ENCODE measurements at regions of chr7 and their contacts with region 1.

Region 1: DNA sequence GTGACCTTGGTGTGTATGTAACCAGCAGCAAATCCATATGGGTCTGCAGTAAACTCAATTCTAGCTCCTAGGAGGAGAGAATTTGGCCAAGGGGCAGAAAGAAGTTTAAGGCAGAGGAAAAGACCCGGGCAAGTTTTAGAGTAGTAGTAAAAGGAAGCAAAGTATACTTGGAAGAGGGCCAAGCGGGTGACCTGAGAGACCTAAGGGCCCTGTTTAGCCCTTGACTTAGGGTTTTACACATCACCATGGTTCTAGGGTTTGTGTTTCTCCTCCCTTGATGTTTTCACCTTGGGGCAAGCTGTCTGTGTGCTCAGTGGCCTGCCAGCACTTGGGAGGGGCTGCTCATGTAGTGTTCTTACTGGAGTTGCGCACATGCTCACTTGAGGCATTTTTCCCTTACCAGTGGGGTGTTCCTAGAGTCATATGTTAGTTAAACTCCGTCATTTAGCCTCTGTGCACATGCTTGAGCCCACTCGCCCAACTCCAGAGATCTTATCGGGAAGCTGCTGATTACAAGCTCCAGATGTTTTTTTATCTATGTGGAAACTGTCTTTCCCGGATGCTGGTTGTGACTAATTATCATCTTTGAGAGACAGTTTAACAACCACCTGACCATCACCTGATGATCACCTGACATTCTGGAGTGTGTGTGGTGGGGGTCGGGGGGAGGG is 137.6 kb upstream of the PRSS1 start:
- DNase-seq: no peak
- H3K4me3 Mint-ChIP-seq: no peak overlapping the region
- H3K27ac Mint-ChIP-seq: no peak overlapping the region
- H3K4me1 Mint-ChIP-seq: peaks cover 11% of the 10 kb centered on the region
- H3K27me3 Mint-ChIP-seq: no peaks in the 10 kb centered on the region
- CTCF ChIP-seq: no peak

Region 2: DNA sequence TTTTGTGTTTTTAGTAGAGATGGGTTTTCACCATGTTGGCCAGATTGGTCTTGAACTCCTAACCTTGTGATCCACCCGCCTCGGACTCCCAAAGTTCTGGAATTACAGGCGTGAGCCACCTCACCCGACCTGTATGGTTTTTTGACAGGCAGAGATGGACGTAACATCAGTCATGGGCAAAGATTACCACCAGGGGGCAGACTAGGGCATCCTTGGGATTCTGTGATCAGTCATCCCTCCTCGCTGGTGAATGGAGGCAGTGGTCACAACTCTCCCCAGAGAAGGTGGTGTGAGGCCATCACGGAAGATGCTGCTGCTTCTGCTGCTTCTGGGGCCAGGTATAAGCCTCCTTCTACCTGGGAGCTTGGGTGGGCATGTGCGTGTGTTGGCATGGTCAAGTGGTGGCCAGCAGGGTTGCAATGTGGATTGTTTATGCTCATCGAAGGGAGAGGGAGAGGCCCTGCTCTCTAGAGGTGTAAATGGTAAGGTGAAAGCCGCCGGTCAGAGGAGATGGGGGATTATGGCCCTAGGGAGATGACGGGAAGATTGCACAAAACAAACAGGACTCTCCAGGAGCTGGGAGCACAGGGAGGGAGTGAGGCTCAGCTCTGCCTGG is 14.8 kb after region 1 on chr7:
- CTCF ChIA-PET with region 1: interaction called, 36 read pairs
- POLR2A ChIA-PET with region 1: no interaction called
- intact Hi-C with region 1: no loop called
- DNase-seq: peak; percentile 77
- H3K4me3 Mint-ChIP-seq: no peak overlapping the region
- H3K27ac Mint-ChIP-seq: no peak overlapping the region
- H3K4me1 Mint-ChIP-seq: peaks cover 5% of the 10 kb centered on the region
- H3K27me3 Mint-ChIP-seq: no peaks in the 10 kb centered on the region
- CTCF ChIP-seq: peak; percentile 51

Region 3: DNA sequence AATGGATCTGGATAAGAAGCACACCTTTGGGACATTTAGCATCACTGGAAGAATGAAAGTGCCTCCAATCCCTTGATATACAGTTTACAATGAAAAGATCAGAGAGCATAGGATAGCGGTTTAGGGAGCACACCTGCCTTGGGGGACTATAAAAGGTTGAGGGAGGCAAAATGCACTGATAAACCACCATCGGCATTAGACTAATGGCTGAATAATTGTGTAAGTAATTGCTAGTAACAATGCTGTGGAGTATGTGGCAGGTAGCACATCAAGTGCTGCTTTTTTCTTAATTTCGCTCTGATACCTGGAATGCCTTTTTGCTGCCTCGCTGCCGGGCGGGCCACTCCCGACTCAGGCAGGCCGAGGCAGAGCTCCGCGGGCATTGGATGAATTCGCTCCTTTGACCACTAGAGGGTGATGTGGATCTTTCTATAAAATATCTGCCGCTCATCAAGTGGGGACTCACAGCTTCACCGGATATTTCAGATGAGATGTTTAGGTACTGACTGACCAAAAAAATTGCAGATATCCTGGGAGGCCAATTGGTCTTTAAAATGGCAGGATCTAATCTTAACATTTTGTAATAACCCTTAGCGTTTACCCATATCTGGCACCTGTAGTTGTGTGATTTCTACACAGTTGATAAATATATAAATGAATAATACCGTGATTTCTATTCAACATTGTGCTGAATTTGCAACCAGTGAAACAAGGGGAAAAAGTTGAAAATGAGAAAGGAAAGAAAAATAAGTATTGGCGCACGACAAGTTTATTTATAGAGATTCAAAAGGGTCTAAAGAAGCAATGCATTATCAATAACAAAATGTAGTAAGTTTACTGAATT is 20.8 kb after region 1 on chr7:
- CTCF ChIA-PET with region 1: interaction called, 36 read pairs
- POLR2A ChIA-PET with region 1: no interaction called
- intact Hi-C with region 1: no loop called
- DNase-seq: peak; percentile 75
- H3K4me3 Mint-ChIP-seq: no peak overlapping the region
- H3K27ac Mint-ChIP-seq: no peak overlapping the region
- H3K4me1 Mint-ChIP-seq: peaks cover 11% of the 10 kb centered on the region
- H3K27me3 Mint-ChIP-seq: peaks cover 14% of the 10 kb centered on the region
- CTCF ChIP-seq: peak; percentile 61

Measured in MCF 10A (cell line).